ENCODE measurements at regions of chr12 and their contacts with region 1.

Region 1: GRCh38 chr12:47779301-47779942 is 6.4 kb downstream of the SLC48A1 start:
- DNase-seq: peak; percentile 94
- H3K4me3 Mint-ChIP-seq: no peak overlapping the region
- H3K27ac Mint-ChIP-seq: peak overlapping the region; percentile 57
- H3K4me1 Mint-ChIP-seq: peaks cover 38% of the 10 kb centered on the region
- H3K27me3 Mint-ChIP-seq: no peaks in the 10 kb centered on the region

Region 2: DNA sequence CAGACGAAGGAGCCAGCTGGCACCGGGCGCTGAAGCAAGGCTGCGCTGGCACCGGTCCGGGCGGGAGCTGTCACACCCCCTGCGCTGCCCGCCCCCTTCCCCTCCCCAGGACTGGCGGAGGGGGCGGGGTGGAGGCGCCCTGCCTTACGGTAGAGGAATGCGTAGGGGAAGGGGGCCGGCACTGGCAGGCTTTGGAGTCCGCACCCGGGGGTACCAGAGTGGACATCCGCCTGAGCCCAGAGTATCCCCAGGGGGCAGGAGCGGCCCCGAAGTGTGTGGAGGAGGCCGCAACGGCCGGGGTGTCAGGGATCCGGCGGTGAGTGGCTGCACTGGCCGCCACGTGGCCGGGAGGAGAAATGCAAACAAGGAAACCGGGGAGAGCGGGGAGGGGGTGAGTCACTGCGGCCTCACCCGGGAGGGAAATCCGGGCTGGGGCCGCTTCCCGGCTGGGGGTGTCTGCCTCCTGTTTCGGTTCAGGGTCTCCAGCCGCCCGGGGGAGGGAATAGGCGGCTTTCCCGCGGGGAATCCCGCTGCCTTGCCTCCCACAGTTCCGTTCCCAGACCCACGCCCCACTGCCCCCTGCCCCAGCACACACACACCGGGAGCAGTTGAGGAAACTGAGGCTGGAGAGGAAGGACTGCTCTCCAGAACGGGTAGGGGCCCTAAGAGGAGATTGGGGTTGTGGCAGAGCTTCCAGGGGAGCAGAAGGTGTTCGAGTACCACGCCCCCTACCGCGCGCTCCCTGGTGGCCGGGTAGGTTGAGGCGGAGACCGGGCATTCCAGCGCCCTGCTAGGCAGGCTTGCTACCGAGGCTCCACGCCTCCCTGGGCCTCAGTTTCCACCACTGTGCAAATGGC is 20.4 kb before region 1 on chr12 and contains the start of gene RAPGEF3:
- CTCF ChIA-PET with region 1: interaction called, 13 read pairs
- POLR2A ChIA-PET with region 1: no interaction called
- DNase-seq: peak; percentile 71
- H3K4me3 Mint-ChIP-seq: peak within 1 kb of the TSS; percentile 72
- H3K27ac Mint-ChIP-seq: no peak within 1 kb of the TSS
- H3K4me1 Mint-ChIP-seq: peaks cover 28% of the 10 kb centered on the region
- H3K27me3 Mint-ChIP-seq: peaks cover 4% of the 10 kb centered on the region
- total RNA-seq, gene RAPGEF3: 0.15 TPM in 1 of 2 experiments, not detected in the other

Region 3: GRCh38 chr12:47793015-47793681 is 13.7 kb after region 1 on chr12:
- CTCF ChIA-PET with region 1: interaction called, 13 read pairs
- POLR2A ChIA-PET with region 1: interaction called, 4 read pairs
- DNase-seq: no peak
- H3K4me3 Mint-ChIP-seq: no peak overlapping the region
- H3K27ac Mint-ChIP-seq: peak overlapping the region; percentile 28
- H3K4me1 Mint-ChIP-seq: peaks cover 4% of the 10 kb centered on the region
- H3K27me3 Mint-ChIP-seq: no peaks in the 10 kb centered on the region